ENCODE measurements at regions of chr22 and their contacts with region 1.

Region 1: DNA sequence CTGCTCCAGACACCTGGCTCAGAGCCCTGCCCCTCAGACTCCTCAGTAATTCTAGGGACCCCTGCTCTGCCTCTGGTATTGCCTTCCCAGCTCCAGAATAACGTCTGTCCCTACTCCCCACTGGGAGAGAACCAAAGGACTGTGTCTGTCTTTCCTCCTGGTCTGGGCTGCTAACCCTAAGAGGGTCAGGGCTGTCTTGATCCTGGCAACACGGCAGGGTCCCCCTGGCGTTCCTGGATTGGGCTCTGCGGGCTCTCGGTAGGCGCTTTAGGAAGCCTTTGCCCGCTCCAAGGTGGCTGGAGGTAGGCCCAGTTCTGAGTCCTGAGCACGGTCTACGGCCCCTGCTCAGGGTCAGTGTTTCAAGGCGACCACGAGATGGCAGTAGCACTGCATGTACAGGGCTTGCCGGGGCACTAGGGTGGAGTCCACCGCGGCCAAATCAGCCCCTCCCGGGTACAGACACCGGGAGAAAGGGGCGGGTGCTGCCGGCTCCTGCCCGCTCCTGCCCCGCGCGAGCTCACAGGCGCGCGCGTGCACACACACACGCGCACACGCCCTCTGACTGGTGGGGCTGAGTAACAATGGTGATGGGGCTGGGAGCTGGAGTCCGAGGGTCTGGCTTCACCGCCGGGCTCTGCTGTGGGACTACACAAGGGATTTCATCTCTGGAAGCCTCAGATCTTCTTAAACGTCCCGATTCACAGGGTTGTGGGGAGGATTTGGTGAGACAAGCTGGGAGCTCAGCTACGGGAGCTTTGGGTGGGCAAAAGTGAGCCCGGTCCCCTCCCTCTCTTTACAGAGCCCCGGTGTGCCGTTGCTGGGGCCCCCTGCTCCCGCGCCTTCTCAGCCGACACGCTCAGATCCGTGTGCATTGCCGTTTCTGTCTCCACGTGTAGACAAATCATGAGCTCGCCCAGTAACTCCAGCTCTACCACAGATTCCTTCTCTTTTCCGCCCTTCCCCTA is 30.1 kb upstream of the HMOX1 start:
- DNase-seq: peak; percentile 80 to 85 (median 83)
- H3K4me3 ChIP-seq: peak overlapping the region in 1 of 2 donors; percentile 62
- H3K4me3 Mint-ChIP-seq: peak overlapping the region; percentile 71 to 89 (median 84)
- H3K27ac ChIP-seq: peak overlapping the region; percentile 8
- H3K27ac Mint-ChIP-seq: peak overlapping the region in 6 of 7 donors; percentile 57 to 91 (median 74)
- H3K4me1 ChIP-seq: peaks cover 25% of the 10 kb centered on the region
- H3K4me1 Mint-ChIP-seq: peaks cover 18 to 29% (median 24%) of the 10 kb centered on the region in 4 donors
- H3K27me3 ChIP-seq: no peaks in the 10 kb centered on the region
- H3K27me3 Mint-ChIP-seq: peaks cover 0 to 6% of the 10 kb centered on the region in 2 donors

Region 2: GRCh38 chr22:35306350-35306967 is 44.4 kb before region 1 on chr22:
- CTCF ChIA-PET with region 1: interaction called, 12 read pairs
- POLR2A ChIA-PET with region 1: no interaction called
- intact Hi-C with region 1: no loop called
- DNase-seq: peak in 3 of 5 donors; percentile 26 to 39 (median 32)
- H3K4me3 ChIP-seq: no peak overlapping the region
- H3K4me3 Mint-ChIP-seq: peak overlapping the region in 7 of 8 donors; percentile 41 to 80 (median 69)
- H3K27ac ChIP-seq: peak overlapping the region; percentile 1
- H3K27ac Mint-ChIP-seq: peak overlapping the region; percentile 77 to 88 (median 87)
- H3K4me1 ChIP-seq: peaks cover 67% of the 10 kb centered on the region
- H3K4me1 Mint-ChIP-seq: peaks cover 55 to 93% (median 78%) of the 10 kb centered on the region in 4 donors
- H3K27me3 ChIP-seq: no peaks in the 10 kb centered on the region
- H3K27me3 Mint-ChIP-seq: no peaks in the 10 kb centered on the region

Region 3: GRCh38 chr22:35399678-35400334 is 49.0 kb after region 1 on chr22 and contains the start of gene MCM5:
- CTCF ChIA-PET with region 1: interaction called, 3 read pairs
- POLR2A ChIA-PET with region 1: no interaction called
- intact Hi-C with region 1: loop called (anchors 5 kb)
- DNase-seq: peak; percentile 97 to 98 (median 98)
- H3K4me3 ChIP-seq: peak within 1 kb of the TSS; percentile 88
- H3K4me3 Mint-ChIP-seq: peak within 1 kb of the TSS; percentile 96 to 100 (median 99)
- H3K27ac ChIP-seq: peak within 1 kb of the TSS; percentile 59
- H3K27ac Mint-ChIP-seq: peak within 1 kb of the TSS; percentile 97 to 99 (median 97)
- H3K4me1 ChIP-seq: peaks cover 22% of the 10 kb centered on the region
- H3K4me1 Mint-ChIP-seq: peaks cover 11 to 33% (median 20%) of the 10 kb centered on the region in 4 donors
- H3K27me3 ChIP-seq: no peaks in the 10 kb centered on the region
- H3K27me3 Mint-ChIP-seq: no peaks in the 10 kb centered on the region
- total RNA-seq, gene MCM5: 48.5 to 58.1 TPM

Region 4: GRCh38 chr22:35582861-35583670 is 232.2 kb after region 1 on chr22:
- CTCF ChIA-PET with region 1: interaction called, 70 read pairs
- POLR2A ChIA-PET with region 1: no interaction called
- intact Hi-C with region 1: no loop called
- DNase-seq: peak; percentile 38 to 56 (median 49)
- H3K4me3 ChIP-seq: no peak overlapping the region
- H3K4me3 Mint-ChIP-seq: no peak overlapping the region
- H3K27ac ChIP-seq: no peak overlapping the region
- H3K27ac Mint-ChIP-seq: no peak overlapping the region
- H3K4me1 ChIP-seq: no peaks in the 10 kb centered on the region
- H3K4me1 Mint-ChIP-seq: peaks cover 0 to 2% (median 0%) of the 10 kb centered on the region in 4 donors
- H3K27me3 ChIP-seq: no peaks in the 10 kb centered on the region
- H3K27me3 Mint-ChIP-seq: no peaks in the 10 kb centered on the region

Region 5: GRCh38 chr22:35622191-35622913 is 271.5 kb after region 1 on chr22:
- CTCF ChIA-PET with region 1: interaction called, 16 read pairs
- POLR2A ChIA-PET with region 1: no interaction called
- intact Hi-C with region 1: no loop called
- DNase-seq: no peak
- H3K4me3 ChIP-seq: no peak overlapping the region
- H3K4me3 Mint-ChIP-seq: no peak overlapping the region
- H3K27ac ChIP-seq: no peak overlapping the region
- H3K27ac Mint-ChIP-seq: no peak overlapping the region
- H3K4me1 ChIP-seq: peaks cover 6% of the 10 kb centered on the region
- H3K4me1 Mint-ChIP-seq: peaks cover 5 to 10% (median 6%) of the 10 kb centered on the region in 4 donors
- H3K27me3 ChIP-seq: no peaks in the 10 kb centered on the region
- H3K27me3 Mint-ChIP-seq: peaks cover 0 to 2% of the 10 kb centered on the region in 2 donors

Region 6: GRCh38 chr22:35921777-35922176 is 571.0 kb after region 1 on chr22:
- CTCF ChIA-PET with region 1: interaction called, 4 read pairs
- POLR2A ChIA-PET with region 1: no interaction called
- intact Hi-C with region 1: loop called (anchors 5 kb)
- DNase-seq: peak in 4 of 5 donors; percentile 13 to 23 (median 17)
- H3K4me3 ChIP-seq: no peak overlapping the region
- H3K4me3 Mint-ChIP-seq: no peak overlapping the region
- H3K27ac ChIP-seq: no peak overlapping the region
- H3K27ac Mint-ChIP-seq: no peak overlapping the region
- H3K4me1 ChIP-seq: no peaks in the 10 kb centered on the region
- H3K4me1 Mint-ChIP-seq: no peaks in the 10 kb centered on the region
- H3K27me3 ChIP-seq: no peaks in the 10 kb centered on the region
- H3K27me3 Mint-ChIP-seq: peaks cover 5 to 6% of the 10 kb centered on the region in 2 donors

Region 7: DNA sequence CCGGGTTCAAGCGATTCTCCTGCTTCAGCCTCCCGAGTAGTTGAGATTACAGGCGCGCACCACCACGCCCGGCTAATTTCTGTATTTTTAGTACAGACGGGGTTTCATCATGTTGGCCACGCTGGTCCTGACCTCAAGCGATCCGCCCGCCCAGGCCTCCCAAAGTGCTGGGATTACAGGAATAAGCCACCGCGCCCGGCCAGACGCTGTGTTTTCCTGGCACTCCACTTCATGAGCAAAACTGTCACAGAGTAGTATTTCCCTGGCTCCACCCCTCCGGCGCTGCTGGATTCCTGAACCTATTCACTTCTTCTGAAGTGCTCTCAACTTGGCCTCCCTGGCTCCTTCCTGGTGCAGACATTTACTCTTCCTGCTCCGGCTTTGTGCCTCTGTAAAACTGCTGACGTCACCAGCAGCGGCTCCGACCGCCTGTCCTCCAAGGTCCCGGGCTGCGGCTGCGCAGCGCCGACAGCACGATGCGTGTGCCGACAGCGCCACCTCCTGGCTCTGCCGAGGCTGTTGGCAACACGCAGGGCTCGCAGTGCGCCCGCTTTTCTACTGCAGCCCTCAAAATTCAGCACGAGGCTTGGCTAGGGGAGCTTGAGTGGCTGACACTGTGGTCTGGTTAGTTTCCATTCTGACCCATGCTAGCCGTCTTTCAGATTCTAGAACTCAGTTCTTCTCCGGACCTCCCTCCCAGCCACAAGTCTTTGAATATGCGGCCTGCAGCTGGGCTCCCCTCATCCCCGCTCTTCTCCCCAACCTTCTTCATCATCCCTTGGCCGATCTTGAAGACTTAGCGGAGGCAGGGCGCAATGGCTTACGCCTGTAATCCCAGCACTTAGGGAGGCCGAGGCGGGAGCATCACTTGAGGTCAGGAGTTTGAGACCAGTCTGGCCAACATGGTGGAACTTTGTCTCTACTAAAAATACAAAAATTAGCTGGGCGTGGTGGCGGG is 773.1 kb after region 1 on chr22:
- CTCF ChIA-PET with region 1: interaction called, 6 read pairs
- POLR2A ChIA-PET with region 1: interaction called, 3 read pairs
- intact Hi-C with region 1: loop called (anchors 1 kb)
- DNase-seq: peak; percentile 90 to 93 (median 92)
- H3K4me3 ChIP-seq: peak overlapping the region in 1 of 2 donors; percentile 59
- H3K4me3 Mint-ChIP-seq: peak overlapping the region; percentile 72 to 84 (median 80)
- H3K27ac ChIP-seq: peak overlapping the region; percentile 37
- H3K27ac Mint-ChIP-seq: peak overlapping the region; percentile 66 to 98 (median 93)
- H3K4me1 ChIP-seq: peaks cover 11% of the 10 kb centered on the region
- H3K4me1 Mint-ChIP-seq: peaks cover 3 to 18% (median 9%) of the 10 kb centered on the region in 4 donors
- H3K27me3 ChIP-seq: no peaks in the 10 kb centered on the region
- H3K27me3 Mint-ChIP-seq: no peaks in the 10 kb centered on the region